Mammary epithelial cell (primary cell): ENCODE measurements at regions of chr9 and their contacts with region 1.

Region 1: DNA sequence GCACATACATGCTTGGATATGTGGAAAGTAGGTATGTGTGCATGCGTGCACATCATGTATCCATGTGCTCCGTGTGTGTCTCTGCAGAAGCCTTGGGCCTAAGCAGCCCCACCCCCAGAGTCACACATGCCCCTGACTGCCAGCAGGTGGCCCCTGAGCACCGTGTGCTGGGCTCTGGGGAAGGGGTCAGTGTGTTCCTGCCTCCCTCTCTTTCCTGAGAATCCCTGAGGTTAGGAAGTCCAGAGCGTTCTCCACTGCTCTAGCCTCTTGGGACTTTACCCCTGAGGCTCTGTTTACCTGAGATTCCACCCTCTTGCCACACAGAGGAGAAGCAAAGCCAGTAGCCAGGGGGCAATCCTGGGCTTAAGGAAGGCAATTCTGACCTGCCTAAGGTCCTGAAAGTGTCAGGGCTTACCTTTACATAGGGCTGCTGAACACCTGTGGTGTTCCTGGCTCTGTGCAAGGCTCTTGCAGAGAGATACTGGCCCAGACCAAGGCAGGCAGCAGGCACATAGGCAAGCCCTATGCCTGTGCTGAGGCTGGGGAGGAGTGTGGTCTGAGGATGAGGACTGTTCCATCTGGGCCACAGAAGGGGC is 207.3 kb downstream of the TMEM38B start:
- DNase-seq: peak; percentile 37
- H3K4me3 ChIP-seq: no peak overlapping the region
- H3K27ac ChIP-seq: no peak overlapping the region
- H3K4me1 ChIP-seq: no peaks in the 10 kb centered on the region
- H3K27me3 ChIP-seq: no peaks in the 10 kb centered on the region
- CTCF ChIP-seq: peak; percentile 72 to 93

Region 2: DNA sequence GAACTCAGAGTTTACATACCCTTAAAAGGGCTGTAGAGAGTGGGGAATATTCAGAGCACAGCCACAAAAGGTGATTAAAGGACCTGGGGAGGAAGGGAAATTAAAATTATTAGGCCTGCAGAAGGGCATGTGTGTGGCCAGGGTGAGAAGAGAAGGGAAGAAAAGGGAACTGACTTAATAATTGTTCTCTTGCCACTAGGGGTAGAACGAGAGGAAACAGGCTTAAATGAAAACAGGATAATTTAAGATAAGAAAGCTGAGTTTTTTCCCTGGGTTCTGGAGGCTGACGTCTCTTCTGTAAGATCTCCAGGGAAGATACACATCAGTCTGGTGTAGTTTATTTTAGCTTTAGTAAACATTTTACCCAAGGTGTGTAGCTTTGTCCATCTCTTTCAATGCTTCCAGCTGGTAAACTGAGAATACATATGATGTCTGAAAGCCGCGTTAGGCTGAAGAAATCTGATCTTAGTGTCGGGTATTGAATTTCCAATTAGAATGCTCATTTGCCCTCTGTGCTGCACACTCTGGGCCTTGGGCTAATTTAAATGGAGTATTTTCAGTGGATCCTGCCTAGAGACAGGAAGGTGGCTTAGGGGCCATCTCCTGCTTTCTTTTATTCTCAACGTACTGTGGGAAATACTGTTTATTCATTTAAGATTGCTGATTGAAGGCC is 209.6 kb after region 1 on chr9:
- CTCF ChIA-PET with region 1: no interaction called
- dilution Hi-C with region 1: no loop called
- in situ Hi-C with region 1: no loop called
- intact Hi-C with region 1: loop called (anchors 5 kb)
- DNase-seq: no peak
- H3K4me3 ChIP-seq: no peak overlapping the region
- H3K27ac ChIP-seq: peak overlapping the region; percentile 95
- H3K4me1 ChIP-seq: peaks cover 37% of the 10 kb centered on the region
- H3K27me3 ChIP-seq: no peaks in the 10 kb centered on the region
- CTCF ChIP-seq: no peak

Region 3: GRCh38 chr9:106218854-106219253 is 317.2 kb after region 1 on chr9:
- CTCF ChIA-PET with region 1: no interaction called
- dilution Hi-C with region 1: no loop called
- in situ Hi-C with region 1: no loop called
- intact Hi-C with region 1: loop called (anchors 2 kb)
- DNase-seq: peak; percentile 46
- H3K4me3 ChIP-seq: no peak overlapping the region
- H3K27ac ChIP-seq: no peak overlapping the region
- H3K4me1 ChIP-seq: no peaks in the 10 kb centered on the region
- H3K27me3 ChIP-seq: no peaks in the 10 kb centered on the region
- CTCF ChIP-seq: no peak

Region 4: GRCh38 chr9:106432631-106433030 is 531.0 kb after region 1 on chr9:
- CTCF ChIA-PET with region 1: no interaction called
- dilution Hi-C with region 1: no loop called
- in situ Hi-C with region 1: no loop called
- intact Hi-C with region 1: loop called (anchors 1 kb)
- DNase-seq: peak; percentile 63
- H3K4me3 ChIP-seq: no peak overlapping the region
- H3K27ac ChIP-seq: no peak overlapping the region
- H3K4me1 ChIP-seq: peaks cover 6% of the 10 kb centered on the region
- H3K27me3 ChIP-seq: no peaks in the 10 kb centered on the region
- CTCF ChIP-seq: peak; percentile 21 to 37

Region 5: GRCh38 chr9:106648799-106649198 is 747.2 kb after region 1 on chr9:
- CTCF ChIA-PET with region 1: no interaction called
- dilution Hi-C with region 1: no loop called
- in situ Hi-C with region 1: no loop called
- intact Hi-C with region 1: loop called (anchors 10 kb)
- DNase-seq: peak; percentile 15
- H3K4me3 ChIP-seq: no peak overlapping the region
- H3K27ac ChIP-seq: no peak overlapping the region
- H3K4me1 ChIP-seq: no peaks in the 10 kb centered on the region
- H3K27me3 ChIP-seq: no peaks in the 10 kb centered on the region
- CTCF ChIP-seq: peak; percentile 40 to 58

Region 6: GRCh38 chr9:107044872-107045271 is 1143.3 kb after region 1 on chr9:
- CTCF ChIA-PET with region 1: no interaction called
- dilution Hi-C with region 1: no loop called
- in situ Hi-C with region 1: no loop called
- intact Hi-C with region 1: loop called (anchors 10 kb)
- DNase-seq: no peak
- H3K4me3 ChIP-seq: no peak overlapping the region
- H3K27ac ChIP-seq: no peak overlapping the region
- H3K4me1 ChIP-seq: no peaks in the 10 kb centered on the region
- H3K27me3 ChIP-seq: no peaks in the 10 kb centered on the region
- CTCF ChIP-seq: peak; percentile 30 to 42